ENCODE measurements at regions of chr17 and their contacts with region 1.

Region 1: GRCh38 chr17:63741221-63742049 is at the start of gene STRADA:
- DNase-seq: peak; percentile 99
- H3K4me3 ChIP-seq: peak within 1 kb of the TSS; percentile 58 to 96 (median 74)
- H3K27ac ChIP-seq: peak within 1 kb of the TSS; percentile 91 to 97 (median 95)
- H3K4me1 ChIP-seq: peaks cover 0 to 20% (median 13%) of the 10 kb centered on the region in 4 donors
- H3K27me3 ChIP-seq: no peaks in the 10 kb centered on the region
- CTCF ChIP-seq: no peak
- EP300 ChIP-seq: no peak
- POLR2A ChIP-seq: peak in 1 of 2 donors; percentile 83
- total RNA-seq, gene STRADA: 20.0 to 45.1 (median 24.7) TPM

Region 2: DNA sequence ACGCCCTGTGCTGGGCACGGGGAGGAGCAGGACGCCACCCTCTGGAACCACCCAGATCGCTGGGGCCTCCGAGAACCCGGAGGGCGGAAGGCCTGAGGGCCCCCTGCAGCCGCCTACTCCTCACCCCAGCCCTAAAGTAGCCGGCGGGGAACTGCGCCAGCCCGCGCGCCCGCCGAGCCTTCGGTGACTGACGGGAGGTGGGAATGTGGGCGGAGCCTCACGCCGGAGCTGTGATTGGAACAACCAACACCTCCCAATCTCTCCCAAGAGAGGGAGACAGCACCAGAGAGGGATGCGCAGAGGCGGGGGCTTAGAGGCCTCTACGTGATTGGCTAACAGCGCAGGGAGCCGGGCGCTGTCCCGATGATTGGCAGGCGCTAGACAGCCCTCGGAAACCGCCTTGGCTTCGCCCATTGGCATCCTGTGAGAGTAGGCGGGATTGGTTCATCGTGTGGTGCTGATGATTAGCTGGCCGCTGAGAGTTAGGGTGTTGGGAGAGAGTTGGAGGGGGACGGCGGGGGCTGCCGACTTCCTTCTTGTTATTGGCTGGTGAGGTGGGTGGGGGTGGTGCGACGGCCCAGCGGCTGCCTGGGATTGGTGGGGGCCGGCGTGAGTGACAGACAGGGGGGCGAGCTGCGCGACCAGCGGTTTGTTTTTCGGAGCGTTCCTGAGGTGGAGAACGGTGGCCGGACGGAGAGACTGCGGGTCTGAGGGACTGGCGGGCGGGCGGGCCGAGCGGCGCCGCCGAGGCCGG is 119.5 kb before region 1 on chr17 and contains the start of gene MAP3K3:
- intact Hi-C with region 1: loop called (anchors 2 kb)
- DNase-seq: peak; percentile 100
- H3K4me3 ChIP-seq: peak within 1 kb of the TSS; percentile 77 to 90 (median 82)
- H3K27ac ChIP-seq: peak within 1 kb of the TSS; percentile 87 to 93 (median 91)
- H3K4me1 ChIP-seq: peaks cover 0 to 43% (median 41%) of the 10 kb centered on the region in 4 donors
- H3K27me3 ChIP-seq: no peaks in the 10 kb centered on the region
- CTCF ChIP-seq: peak in 2 of 4 experiments; percentile 5 to 17
- EP300 ChIP-seq: no peak
- POLR2A ChIP-seq: peak; percentile 52 to 72
- total RNA-seq, gene MAP3K3: 51.5 to 68.7 (median 59.8) TPM

Region 3: DNA sequence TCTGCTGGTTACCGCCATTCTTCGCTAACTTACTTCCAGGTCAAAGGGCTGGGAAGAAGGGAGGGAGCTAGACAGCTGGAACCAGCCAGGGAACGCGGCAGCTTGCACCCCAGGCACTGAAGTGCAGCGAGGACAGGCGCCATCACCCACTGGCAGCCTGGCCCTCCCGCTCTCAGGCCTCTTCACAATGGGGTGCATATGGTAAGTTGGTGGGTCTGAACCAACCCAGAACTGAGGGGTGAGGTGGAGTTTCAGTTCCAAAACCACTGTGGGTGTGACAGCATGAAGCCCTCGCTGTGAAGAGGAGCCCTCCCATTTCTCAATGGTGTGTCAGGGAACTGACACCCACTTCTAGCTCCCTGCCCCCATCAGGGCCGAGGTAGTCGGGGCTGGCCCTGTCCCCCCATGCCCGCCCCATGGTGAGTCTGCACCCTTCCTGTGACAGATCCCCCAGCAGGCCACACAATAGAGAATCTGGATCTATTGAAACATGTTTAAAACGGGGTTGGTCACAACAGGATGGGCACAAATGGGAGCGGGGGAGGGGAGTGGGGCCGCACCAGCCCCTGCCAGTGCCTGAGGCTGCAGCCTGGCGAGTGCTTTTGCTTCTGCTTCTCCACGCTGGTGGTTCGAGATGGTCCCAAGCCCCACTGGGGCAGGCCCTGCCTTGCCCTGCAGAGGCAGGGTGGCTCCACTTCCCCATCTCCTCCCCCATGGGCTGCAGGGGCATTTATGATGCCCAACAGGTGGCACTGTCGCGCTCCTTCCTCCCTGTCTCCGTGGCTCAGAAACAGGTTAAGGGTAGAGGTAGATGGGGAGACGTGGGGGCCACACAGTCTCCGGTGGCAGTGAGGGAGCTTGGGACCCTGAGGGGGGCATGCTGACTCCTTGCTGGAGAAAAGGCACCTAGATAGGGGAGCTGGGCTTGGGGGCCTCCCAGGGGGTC is 43.8 kb before region 1 on chr17:
- intact Hi-C with region 1: loop called (anchors 5 kb)
- DNase-seq: no peak
- H3K4me3 ChIP-seq: peak overlapping the region in 2 of 4 donors; percentile 64 to 76
- H3K27ac ChIP-seq: peak overlapping the region; percentile 65 to 75 (median 70)
- H3K4me1 ChIP-seq: peaks cover 0 to 54% (median 42%) of the 10 kb centered on the region in 4 donors
- H3K27me3 ChIP-seq: no peaks in the 10 kb centered on the region
- CTCF ChIP-seq: peak in 3 of 4 experiments; percentile 23 to 35 (median 31)
- EP300 ChIP-seq: no peak
- POLR2A ChIP-seq: no peak

Region 4: GRCh38 chr17:63773381-63774140 is 32.1 kb after region 1 on chr17 and contains the start of gene CCDC47:
- intact Hi-C with region 1: loop called (anchors 2 kb)
- DNase-seq: peak; percentile 100
- H3K4me3 ChIP-seq: peak within 1 kb of the TSS; percentile 80 to 98 (median 92)
- H3K27ac ChIP-seq: peak within 1 kb of the TSS; percentile 97 to 99 (median 98)
- H3K4me1 ChIP-seq: peaks cover 0 to 52% (median 42%) of the 10 kb centered on the region in 4 donors
- H3K27me3 ChIP-seq: no peaks in the 10 kb centered on the region
- CTCF ChIP-seq: no peak
- EP300 ChIP-seq: peak in 1 of 4 donors; percentile 91
- POLR2A ChIP-seq: peak; percentile 94 to 96
- total RNA-seq, gene CCDC47: 35.7 to 47.1 (median 43.5) TPM